Breast epithelium (tissue), 4 donors: ENCODE measurements at regions of chr3 and their contacts with region 1.

Region 1: GRCh38 chr3:124669470-124669869 is 60.8 kb upstream of the UMPS start:
- DNase-seq: no peak
- H3K4me3 ChIP-seq: no peak overlapping the region
- H3K27ac ChIP-seq: no peak overlapping the region
- H3K4me1 ChIP-seq: no peaks in the 10 kb centered on the region
- H3K27me3 ChIP-seq: no peaks in the 10 kb centered on the region
- CTCF ChIP-seq: no peak
- POLR2A ChIP-seq: no peak

Region 2: DNA sequence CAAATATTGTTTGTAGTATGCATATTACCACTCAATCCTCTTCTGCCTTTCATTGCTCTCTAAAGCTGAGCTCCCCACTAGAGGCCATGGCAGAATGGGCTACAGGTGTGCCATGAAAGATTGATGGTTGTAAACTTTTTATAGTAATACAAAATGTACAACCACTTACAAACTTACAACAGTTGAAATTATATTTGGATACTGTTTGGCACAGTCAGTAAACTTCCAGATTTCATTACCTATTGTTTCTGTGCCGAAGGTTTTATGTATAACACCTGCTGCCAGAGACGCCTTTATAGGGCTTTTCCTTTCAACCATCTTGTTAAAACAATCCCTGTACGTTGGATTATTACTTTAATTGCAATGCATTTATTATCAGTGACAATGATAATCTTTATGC is 684.5 kb before region 1 on chr3:
- intact Hi-C with region 1: loop called (anchors 5 kb)
- DNase-seq: no peak
- H3K4me3 ChIP-seq: no peak overlapping the region
- H3K27ac ChIP-seq: no peak overlapping the region
- H3K4me1 ChIP-seq: no peaks in the 10 kb centered on the region
- H3K27me3 ChIP-seq: no peaks in the 10 kb centered on the region
- CTCF ChIP-seq: no peak
- POLR2A ChIP-seq: no peak

Region 3: GRCh38 chr3:126226374-126226773 is 1556.9 kb after region 1 on chr3:
- intact Hi-C with region 1: loop called (anchors 10 kb)
- DNase-seq: no peak
- H3K4me3 ChIP-seq: no peak overlapping the region
- H3K27ac ChIP-seq: no peak overlapping the region
- H3K4me1 ChIP-seq: no peaks in the 10 kb centered on the region
- H3K27me3 ChIP-seq: no peaks in the 10 kb centered on the region
- CTCF ChIP-seq: no peak
- POLR2A ChIP-seq: no peak